ENCODE measurements at regions of chr12 and their contacts with region 1.

Region 1: DNA sequence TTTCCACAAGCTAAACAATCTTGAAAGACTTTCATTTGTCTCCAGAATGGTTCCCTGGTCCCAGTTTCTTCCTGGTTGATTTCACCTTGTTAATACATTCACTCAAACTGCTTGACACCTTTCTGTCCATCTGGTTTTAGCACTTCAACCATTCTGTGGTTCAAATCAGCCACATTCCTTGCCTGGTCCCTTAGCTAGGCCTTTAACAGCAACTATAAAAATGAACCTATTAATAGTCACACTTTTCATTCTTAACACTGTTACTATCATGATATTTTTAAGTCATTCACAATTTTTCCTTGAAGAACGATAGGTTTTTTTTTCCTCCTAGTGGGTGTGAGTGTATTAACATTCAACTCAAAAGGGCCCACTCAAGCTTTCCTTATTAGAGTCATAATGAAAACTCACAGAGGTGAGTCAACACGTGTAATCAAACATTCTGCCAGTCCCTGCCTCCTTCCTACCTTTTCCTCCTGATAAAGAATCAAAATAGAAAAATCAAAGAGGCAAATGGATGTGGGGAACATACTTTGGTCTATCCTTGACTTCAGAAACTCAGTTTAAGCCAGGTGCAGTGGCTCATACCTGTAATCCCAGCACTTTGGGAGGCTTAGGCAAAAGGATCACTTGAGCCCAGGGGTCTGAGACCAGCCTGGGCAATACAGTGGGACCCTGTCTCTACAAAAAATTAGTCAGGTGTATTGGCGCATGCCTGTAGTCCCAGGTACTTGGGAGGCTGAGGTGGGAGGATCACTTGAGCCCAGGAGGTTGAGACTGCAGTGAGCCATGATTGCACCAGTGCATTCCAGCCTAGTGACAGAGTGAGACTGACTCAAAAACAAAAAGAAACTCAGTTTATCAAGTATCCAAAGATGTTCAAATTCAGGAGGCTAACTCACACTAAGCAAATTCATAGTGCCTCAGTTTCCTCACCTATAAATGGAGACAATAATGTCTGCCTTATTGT is 34.5 kb upstream of the CCNT1 start:
- DNase-seq: no peak
- CTCF ChIP-seq: no peak

Region 2: GRCh38 chr12:48795480-48796455 is 44.7 kb after region 1 on chr12:
- in situ Hi-C with region 1: loop called (anchors 5 kb)
- DNase-seq: peak; percentile 81
- CTCF ChIP-seq: peak; percentile 79

Measured in GM13976 (cell line).